Heart right ventricle (tissue), 16 donors: ENCODE measurements at regions of chr1 and their contacts with region 1.

Region 1: DNA sequence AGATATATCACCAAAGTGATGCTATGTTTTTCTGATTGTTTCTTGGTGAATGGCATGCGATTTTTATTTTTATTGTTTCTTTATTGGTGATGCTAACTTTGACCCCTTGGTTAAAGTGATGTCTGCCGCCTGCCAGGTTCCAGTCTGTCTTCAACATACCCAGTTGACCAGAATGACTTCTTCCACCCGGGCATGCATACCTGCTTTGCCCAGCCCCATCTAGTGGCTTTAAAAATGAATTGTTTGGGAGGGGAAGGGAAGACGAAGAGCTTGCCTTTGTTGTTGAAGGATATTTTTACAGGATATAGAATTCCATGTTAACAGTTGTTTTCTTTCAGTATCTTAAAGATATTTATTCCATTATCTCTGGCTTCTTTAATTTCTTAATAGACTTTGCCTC is 65.1 kb downstream of the ATG4C start:
- DNase-seq: no peak
- ATAC-seq: no peak
- H3K4me3 ChIP-seq: no peak overlapping the region
- H3K27ac ChIP-seq: no peak overlapping the region
- H3K4me1 ChIP-seq: no peaks in the 10 kb centered on the region
- H3K27me3 ChIP-seq: no peaks in the 10 kb centered on the region
- CTCF ChIP-seq: peak in 2 of 9 donors; percentile 9 to 11

Region 2: DNA sequence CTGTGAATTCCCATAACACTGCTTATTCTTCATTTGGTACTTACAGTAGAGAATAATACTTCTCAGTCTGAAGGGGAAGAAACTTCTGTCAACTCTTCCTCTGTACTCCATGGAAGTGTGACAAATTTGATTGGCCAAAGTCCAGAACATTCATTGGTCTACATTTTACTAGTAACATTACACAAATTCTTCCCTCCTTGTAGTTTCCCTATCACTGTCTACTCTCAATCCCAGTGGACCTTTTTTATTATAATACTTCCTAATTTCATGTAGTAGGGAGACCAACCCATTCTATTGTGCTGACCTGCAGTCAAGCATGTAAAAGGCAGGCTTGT is 593.1 kb after region 1 on chr1:
- intact Hi-C with region 1: loop called in 3 of 10 experiments (anchors 5 kb)
- DNase-seq: no peak
- ATAC-seq: no peak
- H3K4me3 ChIP-seq: no peak overlapping the region
- H3K27ac ChIP-seq: no peak overlapping the region
- H3K4me1 ChIP-seq: peaks cover 0 to 4% (median 0%) of the 10 kb centered on the region in 9 donors
- H3K27me3 ChIP-seq: no peaks in the 10 kb centered on the region
- CTCF ChIP-seq: no peak